ENCODE measurements at regions of chr6 and their contacts with region 1.

Region 1: DNA sequence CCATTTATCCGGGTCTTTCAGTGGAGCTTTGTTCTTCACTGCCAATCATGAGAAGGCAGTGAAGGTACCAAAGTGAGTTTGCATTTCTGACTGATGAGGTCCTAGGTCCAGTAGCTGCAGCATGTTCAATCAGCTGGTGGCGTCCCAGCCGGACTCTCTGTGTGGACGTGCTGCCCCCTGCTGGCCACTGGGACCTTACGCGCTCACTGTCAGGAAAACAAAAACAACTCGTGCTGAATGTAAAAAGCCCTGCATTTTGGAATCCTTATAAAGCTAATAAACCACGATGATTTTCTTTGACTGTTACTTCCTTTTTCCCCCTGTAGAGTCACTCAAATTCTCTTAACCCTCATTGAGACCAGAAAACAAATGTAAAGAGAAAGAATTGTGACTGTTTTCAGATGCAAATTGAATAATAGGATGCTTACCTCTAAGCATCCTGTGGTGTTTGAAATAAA is 4.9 kb upstream of the CD24 start:
- DNase-seq: peak; percentile 75 to 83
- H3K4me3 ChIP-seq: no peak overlapping the region
- H3K27ac ChIP-seq: no peak overlapping the region
- H3K4me1 ChIP-seq: peaks cover 14% of the 10 kb centered on the region
- H3K27me3 ChIP-seq: no peaks in the 10 kb centered on the region
- CTCF ChIP-seq: peak; percentile 98

Region 2: DNA sequence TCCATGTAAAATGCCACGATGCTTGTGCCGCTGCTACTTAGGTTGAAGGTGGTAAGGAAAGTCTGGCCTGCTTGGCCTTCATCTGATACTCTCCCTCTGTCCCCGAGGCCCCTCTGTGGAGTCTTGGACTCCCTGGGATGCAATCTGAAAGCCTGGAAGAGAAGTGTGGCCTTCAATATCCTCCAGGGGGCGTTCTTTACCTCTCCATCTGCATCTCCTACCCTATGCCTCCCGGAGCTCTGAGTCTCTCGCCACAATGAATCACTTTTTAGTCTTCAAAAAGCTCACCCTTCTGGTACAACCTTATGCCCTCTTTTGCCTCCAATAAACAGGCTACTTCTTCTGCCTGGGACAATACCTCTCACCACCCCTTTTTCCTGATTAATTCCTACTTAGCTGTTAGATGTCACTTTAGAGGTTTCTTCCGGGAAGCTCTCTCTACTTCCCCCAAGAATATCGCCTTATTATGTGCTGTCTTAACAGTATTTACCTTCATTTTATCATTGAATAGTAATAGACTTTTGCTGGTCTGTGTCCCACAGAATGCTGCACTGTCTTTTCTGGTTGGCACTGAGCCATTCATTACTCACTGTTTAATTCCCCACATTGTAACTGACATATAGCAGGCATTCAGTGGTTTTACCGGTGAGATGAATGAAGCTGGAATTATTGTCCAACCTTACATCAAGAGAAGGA is 640.0 kb before region 1 on chr6:
- CTCF ChIA-PET with region 1: interaction called, 3 read pairs
- POLR2A ChIA-PET with region 1: no interaction called
- intact Hi-C with region 1: loop called (anchors 1 kb)
- DNase-seq: peak; percentile 65 to 75
- H3K4me3 ChIP-seq: no peak overlapping the region
- H3K27ac ChIP-seq: peak overlapping the region; percentile 18; the same call in 1 of the 2 replicates
- H3K4me1 ChIP-seq: peaks cover 9% of the 10 kb centered on the region
- H3K27me3 ChIP-seq: no peaks in the 10 kb centered on the region
- CTCF ChIP-seq: peak; percentile 90

Region 3: GRCh38 chr6:106444777-106445507 is 534.5 kb before region 1 on chr6:
- CTCF ChIA-PET with region 1: interaction called, 3 read pairs
- POLR2A ChIA-PET with region 1: no interaction called
- intact Hi-C with region 1: loop called (anchors 1 kb)
- DNase-seq: peak; percentile 15 to 69
- H3K4me3 ChIP-seq: no peak overlapping the region
- H3K27ac ChIP-seq: no peak overlapping the region
- H3K4me1 ChIP-seq: peaks cover 24% of the 10 kb centered on the region
- H3K27me3 ChIP-seq: no peaks in the 10 kb centered on the region
- CTCF ChIP-seq: peak; percentile 89

Region 4: GRCh38 chr6:106629103-106629858 is 350.2 kb before region 1 on chr6 and contains the starts of genes QRSL1 and RTN4IP1:
- CTCF ChIA-PET with region 1: interaction called, 5 read pairs
- POLR2A ChIA-PET with region 1: no interaction called
- intact Hi-C with region 1: loop called (anchors 1 kb)
- DNase-seq: peak; percentile 83 to 88
- H3K4me3 ChIP-seq: peak within 1 kb of the TSS; percentile 96
- H3K27ac ChIP-seq: peak within 1 kb of the TSS; percentile 68
- H3K4me1 ChIP-seq: peaks cover 10% of the 10 kb centered on the region
- H3K27me3 ChIP-seq: no peaks in the 10 kb centered on the region
- CTCF ChIP-seq: no peak
- total RNA-seq, gene QRSL1: 11.7 and 13.4 TPM in 2 replicates
- total RNA-seq, gene RTN4IP1: 8.1 and 10.0 TPM in 2 replicates

Region 5: DNA sequence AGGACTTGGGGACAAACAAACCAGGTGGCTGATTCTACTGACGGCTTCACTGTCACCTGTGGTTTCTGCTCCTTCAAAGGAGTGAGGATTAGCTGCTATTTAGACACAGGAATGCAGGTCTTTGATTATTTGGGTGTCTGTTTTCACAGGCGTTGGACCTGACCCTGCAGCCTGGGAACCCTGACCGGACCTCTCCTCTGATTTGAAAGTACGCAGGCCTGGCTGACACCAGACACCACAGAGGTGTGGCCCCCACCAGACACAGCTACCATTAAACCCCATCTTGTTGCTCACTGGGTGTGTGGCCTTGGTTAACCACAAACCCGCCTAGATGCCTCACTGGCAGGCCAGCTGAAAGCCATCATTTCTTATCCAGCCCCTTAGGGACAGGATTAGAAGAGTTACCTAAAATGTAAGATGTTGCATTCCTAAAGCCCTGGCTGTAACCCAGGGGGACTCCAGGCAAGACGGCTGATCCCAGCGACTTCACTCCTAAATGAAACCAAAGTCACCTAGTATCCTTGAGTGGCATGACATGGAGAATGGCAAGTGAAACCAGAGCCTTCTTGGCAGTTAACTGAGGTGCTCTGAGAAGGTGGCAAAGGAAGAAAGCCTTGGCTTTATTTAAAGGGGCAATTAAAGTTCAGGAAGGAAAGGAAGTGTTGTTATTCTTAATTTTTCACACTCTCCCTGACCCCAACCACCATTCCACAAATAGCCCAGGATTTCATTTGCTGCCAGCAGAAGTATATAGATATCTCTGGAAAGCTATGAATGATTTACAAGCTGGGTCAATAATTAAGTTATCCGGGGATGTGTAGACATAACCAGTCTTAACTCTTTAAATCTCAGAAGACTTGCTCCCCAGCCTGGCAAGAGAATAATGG is 180.2 kb before region 1 on chr6:
- CTCF ChIA-PET with region 1: interaction called, 8 read pairs
- POLR2A ChIA-PET with region 1: interaction called, 18 read pairs
- intact Hi-C with region 1: loop called (anchors 1 kb)
- DNase-seq: peak; percentile 94 to 100
- H3K4me3 ChIP-seq: peak overlapping the region; percentile 42; the same call in 1 of the 2 replicates
- H3K27ac ChIP-seq: peak overlapping the region; percentile 95
- H3K4me1 ChIP-seq: peaks cover 44% of the 10 kb centered on the region
- H3K27me3 ChIP-seq: no peaks in the 10 kb centered on the region
- CTCF ChIP-seq: no peak

Region 6: DNA sequence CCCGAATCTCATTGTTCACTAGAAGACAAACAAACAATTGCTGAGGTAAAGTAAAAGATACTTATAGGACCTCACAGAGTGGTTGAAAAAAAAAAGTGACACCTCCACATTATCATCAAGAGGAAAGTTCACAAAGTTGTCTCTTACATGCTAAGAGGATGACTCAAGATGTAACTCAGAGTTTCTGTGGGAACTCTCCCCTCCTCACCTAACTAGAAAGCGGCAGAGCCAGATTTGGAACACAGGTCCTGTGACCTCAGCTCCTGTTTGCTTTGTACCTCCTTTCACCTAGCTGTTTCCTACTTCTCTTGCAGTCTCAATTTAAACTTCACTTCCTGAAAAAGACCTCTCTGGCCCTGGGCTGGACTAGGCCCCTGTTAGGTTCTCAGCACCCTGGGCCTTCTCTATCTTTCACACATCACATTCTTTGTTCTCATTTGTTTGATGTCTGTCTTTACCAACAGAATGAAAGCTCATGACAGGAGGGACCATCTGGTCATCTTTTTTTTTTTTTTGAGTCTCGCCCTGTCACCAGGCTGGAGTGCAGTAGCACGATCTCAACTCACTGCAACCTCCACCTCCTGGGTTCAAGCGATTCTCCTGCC is 65.7 kb before region 1 on chr6:
- CTCF ChIA-PET with region 1: no interaction called
- POLR2A ChIA-PET with region 1: no interaction called
- intact Hi-C with region 1: loop called (anchors 1 kb)
- DNase-seq: peak; percentile 43 to 98
- H3K4me3 ChIP-seq: no peak overlapping the region
- H3K27ac ChIP-seq: peak overlapping the region; percentile 98
- H3K4me1 ChIP-seq: peaks cover 46% of the 10 kb centered on the region
- H3K27me3 ChIP-seq: no peaks in the 10 kb centered on the region
- CTCF ChIP-seq: no peak

Region 7: GRCh38 chr6:107801173-107801886 is 821.9 kb after region 1 on chr6:
- CTCF ChIA-PET with region 1: interaction called, 16 read pairs
- POLR2A ChIA-PET with region 1: no interaction called
- intact Hi-C with region 1: no loop called
- DNase-seq: no peak
- H3K4me3 ChIP-seq: no peak overlapping the region
- H3K27ac ChIP-seq: no peak overlapping the region
- H3K4me1 ChIP-seq: no peaks in the 10 kb centered on the region
- H3K27me3 ChIP-seq: peaks cover 25% of the 10 kb centered on the region; the same call in 1 of the 2 replicates
- CTCF ChIP-seq: no peak

Measured in PC-9 (cell line).